ENCODE measurements at regions of chr11 and their contacts with region 1.

Region 1: DNA sequence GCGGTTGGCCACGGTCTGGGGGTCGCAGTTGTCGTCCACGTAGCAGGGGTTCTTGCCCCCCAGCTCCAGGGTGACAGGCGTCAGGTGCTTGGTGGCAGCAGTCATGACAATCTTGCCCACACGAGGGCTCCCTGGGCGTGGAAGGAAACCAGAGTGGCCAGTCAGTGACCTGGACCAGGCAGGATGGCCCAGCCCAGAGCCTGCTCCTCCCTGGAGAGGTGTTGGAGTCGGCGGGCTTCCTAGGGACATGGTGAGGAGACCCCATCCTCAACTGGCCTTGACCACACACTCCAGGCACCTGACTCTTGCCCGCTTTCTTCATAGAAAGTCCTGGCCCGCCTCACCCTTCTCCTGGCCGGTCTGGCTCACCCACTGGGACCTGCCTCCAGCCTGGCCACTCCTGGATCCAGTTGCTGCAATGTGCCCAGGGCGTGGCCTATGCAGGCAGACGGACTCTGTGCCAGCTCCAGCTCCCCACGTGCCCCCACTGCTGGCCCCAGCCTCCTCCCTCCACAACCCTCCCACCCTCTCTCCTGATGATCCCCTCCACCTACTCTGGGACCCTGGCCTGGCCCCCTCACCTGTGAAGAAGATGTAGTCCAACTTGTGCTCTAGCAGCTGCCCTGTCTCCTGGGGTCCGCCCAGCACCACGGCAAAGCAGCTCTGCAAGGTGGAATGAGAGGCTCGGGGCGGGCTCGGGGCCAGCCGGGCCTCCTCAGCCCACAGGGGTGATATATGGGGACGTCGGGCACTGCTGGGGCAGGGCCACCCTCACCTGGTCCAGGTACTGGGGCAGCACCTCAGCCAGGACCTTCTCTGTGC is 8.7 kb downstream of the ALDH3B2 start:
- DNase-seq: peak; percentile 72
- ATAC-seq: peak; percentile 87
- H3K4me3 ChIP-seq: no peak overlapping the region
- H3K27ac ChIP-seq: no peak overlapping the region
- H3K4me1 ChIP-seq: no peaks in the 10 kb centered on the region
- H3K27me3 ChIP-seq: no peaks in the 10 kb centered on the region
- CTCF ChIP-seq: peak; percentile 76

Region 2: DNA sequence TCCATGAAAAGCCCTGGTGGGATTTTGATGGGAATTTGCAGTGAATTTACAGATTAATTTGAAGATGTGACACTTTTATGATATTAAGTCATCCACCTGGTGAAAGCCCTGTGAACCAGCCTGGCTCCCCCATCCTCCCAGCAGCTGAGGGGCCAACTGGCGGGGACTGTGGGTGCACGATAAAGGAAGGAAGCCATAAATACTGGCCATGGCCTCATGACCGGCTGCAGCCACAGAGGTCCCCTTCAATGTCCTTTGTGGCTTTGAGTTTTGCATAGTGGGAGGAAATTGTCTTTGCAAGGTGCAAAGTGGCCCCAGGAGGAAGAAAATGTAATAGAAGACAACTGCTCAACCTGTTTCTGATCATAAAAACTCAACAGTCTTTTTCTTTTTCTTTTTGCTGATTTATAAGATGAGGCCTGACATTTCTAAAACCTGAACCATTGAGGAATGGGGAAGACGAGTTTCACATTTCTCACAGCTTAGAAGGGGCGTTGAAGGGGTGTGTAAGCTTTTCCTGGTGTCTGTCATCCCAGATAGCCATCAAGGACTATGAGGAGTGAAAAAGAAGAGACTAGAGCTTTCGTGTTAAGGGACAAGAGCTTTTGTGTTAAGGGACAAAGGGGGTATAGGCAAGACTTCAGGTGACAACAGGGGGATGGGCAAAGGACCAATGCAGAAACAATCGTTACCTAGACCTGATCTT is 65.3 kb before region 1 on chr11:
- CTCF ChIA-PET with region 1: no interaction called
- POLR2A ChIA-PET with region 1: no interaction called
- intact Hi-C with region 1: no loop called
- DNase-seq: no peak
- ATAC-seq: no peak
- H3K4me3 ChIP-seq: no peak overlapping the region
- H3K27ac ChIP-seq: no peak overlapping the region
- H3K4me1 ChIP-seq: no peaks in the 10 kb centered on the region
- H3K27me3 ChIP-seq: peaks cover 7% of the 10 kb centered on the region; the same call in 1 of the 2 replicates
- CTCF ChIP-seq: no peak

Region 3: DNA sequence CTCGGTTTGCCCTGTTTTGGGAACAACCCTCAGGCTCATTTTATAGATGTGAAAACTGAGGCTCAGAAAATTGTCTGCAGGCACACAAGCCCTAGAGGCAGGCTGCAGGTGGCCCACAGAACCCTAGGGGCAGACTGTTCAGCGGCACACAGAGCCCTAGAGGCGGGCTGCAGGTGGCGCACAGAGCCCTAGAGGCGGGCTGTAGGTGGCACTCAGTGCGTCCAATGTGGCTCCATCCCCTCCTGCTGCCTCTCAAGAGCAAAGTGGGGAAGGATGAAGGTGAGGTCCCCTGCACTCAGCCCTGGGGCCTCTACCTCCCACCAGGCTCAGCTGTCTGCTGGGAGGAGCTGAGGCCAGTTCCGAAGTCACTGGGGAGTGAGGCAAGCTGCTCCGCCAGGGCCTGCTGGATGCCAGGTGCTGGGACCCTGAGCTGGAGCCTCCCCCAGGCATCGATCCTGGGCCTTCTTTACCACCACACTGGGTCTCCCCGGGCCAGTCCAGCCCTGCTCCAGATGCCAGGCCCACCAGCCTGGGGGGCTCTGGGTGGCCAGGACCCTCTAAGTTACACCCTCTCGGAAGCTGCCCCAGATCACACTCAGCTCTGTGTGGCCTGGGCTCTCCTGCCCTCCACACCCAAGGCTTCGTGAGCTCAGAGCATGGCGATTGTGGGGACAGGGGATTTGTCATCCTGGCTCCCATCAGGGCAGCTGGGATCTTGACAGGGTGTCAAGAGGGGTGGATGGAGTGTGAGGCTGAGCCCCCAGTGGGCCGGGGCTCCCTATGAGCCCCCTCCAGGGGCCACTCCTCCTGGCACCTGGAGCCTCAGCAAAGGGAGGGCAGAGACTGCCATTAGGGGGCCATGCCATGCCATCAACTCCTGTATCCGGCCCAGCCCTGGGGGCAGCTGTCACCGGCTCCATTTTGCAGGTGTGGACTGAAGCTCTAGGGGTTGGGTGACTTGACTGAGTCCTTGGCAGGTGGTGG is 17.3 kb before region 1 on chr11:
- CTCF ChIA-PET with region 1: no interaction called
- POLR2A ChIA-PET with region 1: no interaction called
- intact Hi-C with region 1: no loop called
- DNase-seq: no peak
- ATAC-seq: peak; percentile 55; the same call in 1 of the 2 replicates
- H3K4me3 ChIP-seq: no peak overlapping the region
- H3K27ac ChIP-seq: no peak overlapping the region
- H3K4me1 ChIP-seq: no peaks in the 10 kb centered on the region
- H3K27me3 ChIP-seq: no peaks in the 10 kb centered on the region
- CTCF ChIP-seq: peak; percentile 41; the same call in 1 of the 2 replicates

Region 4: GRCh38 chr11:67691149-67691548 is 25.4 kb after region 1 on chr11:
- CTCF ChIA-PET with region 1: interaction called, 8 read pairs
- POLR2A ChIA-PET with region 1: no interaction called
- intact Hi-C with region 1: loop called (anchors 1 kb)
- DNase-seq: peak; percentile 29
- ATAC-seq: 0 out of 2 replicates have a peak, but pooled peaks have one; percentile 48
- H3K4me3 ChIP-seq: no peak overlapping the region
- H3K27ac ChIP-seq: no peak overlapping the region
- H3K4me1 ChIP-seq: no peaks in the 10 kb centered on the region
- H3K27me3 ChIP-seq: no peaks in the 10 kb centered on the region
- CTCF ChIP-seq: peak; percentile 73